ENCODE measurements at regions of chr2 and their contacts with region 1.

Region 1: DNA sequence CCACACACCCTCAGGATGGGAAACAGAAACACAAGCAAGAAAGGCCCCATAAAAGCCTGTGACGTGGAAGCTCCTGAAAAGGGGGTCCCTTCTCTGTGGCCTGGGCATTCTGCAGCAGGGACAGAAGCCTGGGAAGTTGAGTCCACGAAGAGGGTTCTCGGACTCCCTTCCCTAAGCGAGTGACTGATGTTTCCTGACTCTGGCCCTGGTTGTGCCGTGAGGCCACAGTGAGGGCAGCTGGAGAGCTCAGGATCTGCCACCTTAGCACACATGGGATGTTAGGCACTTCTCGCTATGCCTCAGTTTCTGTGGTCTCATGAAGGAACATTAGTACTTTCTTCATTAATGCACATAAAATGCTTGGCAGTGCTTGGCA is 87.2 kb upstream of the ZFP36L2 start:
- DNase-seq: no peak
- H3K4me3 Mint-ChIP-seq: no peak overlapping the region
- H3K27ac Mint-ChIP-seq: no peak overlapping the region
- H3K4me1 Mint-ChIP-seq: peaks cover 11% of the 10 kb centered on the region
- H3K27me3 Mint-ChIP-seq: no peaks in the 10 kb centered on the region

Region 2: GRCh38 chr2:43285987-43286386 is 27.6 kb before region 1 on chr2:
- intact Hi-C with region 1: no loop called
- DNase-seq: no peak
- H3K4me3 Mint-ChIP-seq: no peak overlapping the region
- H3K27ac Mint-ChIP-seq: no peak overlapping the region
- H3K4me1 Mint-ChIP-seq: peaks cover 3% of the 10 kb centered on the region
- H3K27me3 Mint-ChIP-seq: no peaks in the 10 kb centered on the region

Region 3: DNA sequence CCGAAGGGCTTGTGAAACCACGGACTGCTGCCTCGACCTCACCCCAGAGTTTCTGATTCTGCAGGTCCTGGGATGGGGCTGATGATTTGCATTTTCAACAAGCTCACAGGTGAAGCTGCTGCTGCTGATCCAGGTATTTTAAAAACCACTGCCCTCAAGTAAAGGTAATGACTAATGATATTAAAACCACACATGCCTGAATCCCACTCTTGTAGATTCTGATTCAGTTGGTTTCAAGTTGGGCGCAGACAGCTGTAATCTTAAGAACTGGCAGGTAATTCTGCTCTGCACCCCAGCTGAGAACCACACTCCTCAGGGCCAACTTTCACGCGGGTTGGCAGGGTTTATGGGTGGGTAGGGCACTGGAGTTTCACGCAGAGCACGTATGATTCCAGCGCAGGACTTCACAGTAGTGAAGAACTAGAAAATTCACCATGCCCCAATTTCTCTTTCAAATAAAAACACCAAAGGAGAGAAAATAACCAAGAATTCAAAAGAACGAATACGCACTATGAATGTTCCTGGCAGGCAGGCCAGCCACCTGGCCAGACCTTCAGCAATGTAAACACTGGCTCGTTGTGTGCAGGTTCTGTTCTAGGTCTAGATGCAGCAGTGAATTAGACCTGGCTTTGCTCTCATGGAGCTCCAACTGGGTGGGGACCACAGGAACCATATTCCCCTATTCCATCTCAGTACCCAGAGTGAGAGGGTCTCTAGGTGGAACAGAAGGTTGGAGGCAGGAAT is 12.6 kb before region 1 on chr2:
- intact Hi-C with region 1: no loop called
- DNase-seq: no peak
- H3K4me3 Mint-ChIP-seq: no peak overlapping the region
- H3K27ac Mint-ChIP-seq: no peak overlapping the region
- H3K4me1 Mint-ChIP-seq: peaks cover 25% of the 10 kb centered on the region
- H3K27me3 Mint-ChIP-seq: no peaks in the 10 kb centered on the region

Region 4: DNA sequence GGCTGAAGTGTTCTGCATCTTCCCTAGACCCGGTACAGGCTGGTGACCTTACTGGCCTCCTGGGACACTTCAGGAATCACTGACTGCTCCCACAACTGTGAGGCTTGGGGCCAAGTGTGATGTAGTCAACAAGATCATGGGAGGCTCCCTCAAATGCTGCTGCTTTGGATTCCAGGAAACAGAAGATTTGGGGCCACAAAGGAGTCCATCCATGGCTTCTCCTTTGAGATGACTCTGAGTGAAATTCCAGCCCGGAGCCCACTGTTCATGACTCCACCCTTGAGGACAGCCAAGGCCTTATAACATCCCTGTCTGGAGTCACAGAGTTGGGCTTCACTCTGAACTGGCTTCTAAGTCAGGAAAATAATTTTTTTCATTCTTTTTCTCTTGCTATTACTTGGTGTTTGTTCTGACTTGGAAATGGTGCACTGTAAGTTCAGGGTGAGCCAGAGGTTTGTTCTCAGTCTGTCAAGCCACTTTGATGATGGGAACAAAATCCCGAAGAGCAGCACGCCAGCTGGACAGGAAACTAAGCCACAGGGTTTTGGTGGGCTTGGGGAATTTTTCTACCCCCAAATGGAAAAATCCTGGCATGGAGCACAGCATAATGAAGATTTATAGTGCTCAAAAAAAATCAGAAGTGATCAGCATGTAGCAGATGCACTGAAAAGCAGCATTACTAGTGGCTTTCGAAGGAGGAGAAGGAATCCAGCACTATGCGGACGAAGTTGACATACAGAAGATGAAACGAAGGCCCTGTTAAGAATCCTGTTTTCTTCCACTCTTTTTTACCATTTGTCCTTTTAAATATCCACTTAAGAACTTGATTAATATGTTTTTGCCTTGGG is 10.9 kb after region 1 on chr2:
- intact Hi-C with region 1: loop called (anchors 1 kb)
- DNase-seq: no peak
- H3K4me3 Mint-ChIP-seq: no peak overlapping the region
- H3K27ac Mint-ChIP-seq: no peak overlapping the region
- H3K4me1 Mint-ChIP-seq: no peaks in the 10 kb centered on the region
- H3K27me3 Mint-ChIP-seq: no peaks in the 10 kb centered on the region

Region 5: DNA sequence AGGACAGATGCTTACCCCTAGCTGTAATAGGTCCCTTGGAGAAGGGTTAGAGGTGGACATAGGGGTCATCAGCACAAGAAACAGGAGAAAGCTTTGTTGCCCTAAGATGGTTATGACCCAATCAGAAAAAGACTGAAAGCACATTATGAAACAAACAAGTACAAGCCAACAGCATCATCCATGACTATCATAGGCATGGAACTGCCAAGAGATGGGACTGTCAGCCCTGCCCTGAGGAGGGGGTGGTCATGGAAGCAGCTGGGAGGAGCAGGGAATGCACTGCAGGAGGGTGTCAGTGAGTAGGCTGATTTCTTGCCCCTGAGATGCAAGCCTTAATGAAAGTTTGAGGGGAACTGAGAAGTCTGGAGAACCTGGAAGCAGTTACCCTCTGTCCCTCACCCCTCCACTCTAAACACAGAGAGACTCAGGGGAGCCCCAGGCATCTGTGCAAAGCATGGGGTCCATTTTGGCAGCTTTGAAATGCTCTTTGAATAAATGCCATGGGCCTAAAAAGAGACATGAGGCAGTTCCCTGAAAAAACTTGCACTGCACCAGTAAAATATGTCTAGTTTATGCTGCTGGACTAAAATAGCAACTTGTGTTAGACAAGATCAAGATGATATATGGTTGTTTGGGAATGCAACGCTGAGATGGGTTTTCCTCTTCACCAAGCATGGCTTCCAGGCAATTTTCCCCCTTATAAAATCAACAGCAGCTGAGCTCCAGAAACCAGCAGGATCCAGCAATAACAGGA is 35.5 kb after region 1 on chr2:
- intact Hi-C with region 1: no loop called
- DNase-seq: no peak
- H3K4me3 Mint-ChIP-seq: no peak overlapping the region
- H3K27ac Mint-ChIP-seq: no peak overlapping the region
- H3K4me1 Mint-ChIP-seq: no peaks in the 10 kb centered on the region
- H3K27me3 Mint-ChIP-seq: no peaks in the 10 kb centered on the region

Measured in activated T-helper 1 cell treated with anti-CD3 and anti-CD28 coated beads, Interleukin-12 subunit alpha, Interleukin-12 subunit beta, Interleukin-2, Interleukin-4 antibody, amounts not matched to agents 30 ng/mL and 10 ng/mL and 1 ng/mL, durations not matched to agents 14 hours and 24 hours and 36 hours (primary cell).